T-cell (primary cell): ENCODE measurements at regions of chr22 and their contacts with region 1.

Region 1: GRCh38 chr22:45246060-45246985 is 5.6 kb upstream of the KIAA0930 start:
- DNase-seq: no peak
- ATAC-seq: peak in 2 of 4 experiments; percentile 20 to 29
- H3K4me3 ChIP-seq: no peak overlapping the region
- H3K4me3 Mint-ChIP-seq: peak overlapping the region in 1 of 3 donors; percentile 35
- H3K27ac ChIP-seq: peak overlapping the region; percentile 47
- H3K27ac Mint-ChIP-seq: peak overlapping the region; percentile 87 to 91
- H3K4me1 ChIP-seq: peaks cover 0 to 32% of the 10 kb centered on the region in 2 experiments
- H3K4me1 Mint-ChIP-seq: peaks cover 18 to 38% (median 21%) of the 10 kb centered on the region in 3 donors
- H3K27me3 ChIP-seq: no peaks in the 10 kb centered on the region
- H3K27me3 Mint-ChIP-seq: no peaks in the 10 kb centered on the region

Region 2: DNA sequence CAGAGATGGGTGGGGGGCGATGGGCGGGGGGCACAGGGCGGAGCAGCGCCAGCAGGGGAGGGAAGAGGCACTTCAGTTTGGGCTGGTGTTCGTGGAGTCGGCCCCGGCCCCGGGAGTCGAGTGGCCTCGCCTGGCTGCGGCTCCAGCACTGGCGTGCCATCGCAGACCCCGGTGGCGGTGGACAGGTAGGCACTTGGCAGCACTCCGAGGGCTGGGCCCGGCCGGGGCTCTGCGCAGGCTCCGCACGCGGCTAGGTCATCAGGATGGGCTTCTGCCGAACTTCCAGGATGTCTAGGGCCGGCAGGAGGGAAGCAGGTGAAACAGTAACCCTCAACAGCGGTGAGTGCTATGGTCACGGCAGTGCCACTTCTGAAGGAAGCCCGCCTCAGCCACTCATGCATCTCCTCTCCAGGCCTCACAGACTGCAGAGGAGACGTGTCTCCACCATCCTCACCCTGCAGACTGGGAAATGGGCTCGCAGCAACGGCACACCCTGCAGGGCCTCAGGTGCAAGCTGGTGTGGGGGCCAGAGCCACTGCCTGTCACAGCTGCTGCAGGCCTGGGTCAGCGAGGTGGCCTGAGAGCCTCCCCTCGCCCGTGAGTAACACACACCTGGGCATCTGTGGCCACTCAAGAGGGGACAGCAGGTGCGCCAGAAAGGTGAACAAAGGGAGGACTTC is 49.3 kb before region 1 on chr22:
- CTCF ChIA-PET with region 1: interaction called in 1 of 2 experiments, 12 read pairs
- POLR2A ChIA-PET with region 1: no interaction called
- DNase-seq: no peak
- ATAC-seq: no peak
- H3K4me3 ChIP-seq: no peak overlapping the region
- H3K4me3 Mint-ChIP-seq: no peak overlapping the region
- H3K27ac ChIP-seq: no peak overlapping the region
- H3K27ac Mint-ChIP-seq: no peak overlapping the region
- H3K4me1 ChIP-seq: no peaks in the 10 kb centered on the region
- H3K4me1 Mint-ChIP-seq: no peaks in the 10 kb centered on the region
- H3K27me3 ChIP-seq: no peaks in the 10 kb centered on the region
- H3K27me3 Mint-ChIP-seq: no peaks in the 10 kb centered on the region

Region 3: GRCh38 chr22:45577746-45578523 is 331.6 kb after region 1 on chr22:
- CTCF ChIA-PET with region 1: no interaction called
- POLR2A ChIA-PET with region 1: no interaction called
- DNase-seq: peak; percentile 21 to 83 (median 63)
- ATAC-seq: peak; percentile 56 to 75 (median 68)
- H3K4me3 ChIP-seq: no peak overlapping the region
- H3K4me3 Mint-ChIP-seq: no peak overlapping the region
- H3K27ac ChIP-seq: no peak overlapping the region
- H3K27ac Mint-ChIP-seq: no peak overlapping the region
- H3K4me1 ChIP-seq: peaks cover 0 to 8% of the 10 kb centered on the region in 2 experiments
- H3K4me1 Mint-ChIP-seq: peaks cover 0 to 8% (median 7%) of the 10 kb centered on the region in 3 donors
- H3K27me3 ChIP-seq: peaks cover 0 to 36% of the 10 kb centered on the region in 2 experiments
- H3K27me3 Mint-ChIP-seq: peaks cover 11 to 16% of the 10 kb centered on the region in 2 donors